ENCODE measurements at regions of chr17 and their contacts with region 1.

Region 1: GRCh38 chr17:16363749-16364536 is 10.7 kb upstream of the CENPV start:
- DNase-seq: peak; percentile 73 to 77
- ATAC-seq: peak; percentile 83 to 93 (median 88)
- H3K4me3 ChIP-seq: no peak overlapping the region
- H3K27ac ChIP-seq: peak overlapping the region; percentile 51
- H3K4me1 ChIP-seq: peaks cover 4% of the 10 kb centered on the region
- H3K27me3 ChIP-seq: no peaks in the 10 kb centered on the region
- CTCF ChIP-seq: peak; percentile 91

Region 2: GRCh38 chr17:16438557-16439302 is 74.8 kb after region 1 on chr17:
- intact Hi-C with region 1: loop called in 1 of 2 experiments (anchors 5 kb)
- DNase-seq: peak; percentile 94 to 96
- ATAC-seq: peak; percentile 89 to 94 (median 93)
- H3K4me3 ChIP-seq: peak overlapping the region; percentile 96
- H3K27ac ChIP-seq: peak overlapping the region; percentile 94
- H3K4me1 ChIP-seq: peaks cover 31% of the 10 kb centered on the region
- H3K27me3 ChIP-seq: no peaks in the 10 kb centered on the region
- CTCF ChIP-seq: no peak

Region 3: DNA sequence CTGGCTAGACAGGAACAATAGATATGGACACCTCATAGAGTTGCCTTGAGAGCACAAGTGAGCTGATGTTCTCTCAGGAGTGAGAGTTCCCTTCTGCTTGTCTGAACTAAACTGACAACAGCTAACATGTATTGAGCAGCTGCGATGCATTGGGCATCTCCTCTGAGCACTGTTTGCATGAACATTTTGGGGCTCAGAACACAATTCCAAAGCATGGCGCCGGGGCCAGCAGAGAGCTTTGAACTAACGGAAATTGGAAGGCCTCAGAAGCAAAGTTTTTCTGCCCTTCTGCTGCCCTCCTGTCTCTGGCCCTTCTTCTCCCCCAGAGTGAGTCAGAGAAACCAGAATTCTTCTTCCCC is 89.5 kb after region 1 on chr17:
- intact Hi-C with region 1: loop called in 1 of 2 experiments (anchors 5 kb)
- DNase-seq: no peak
- ATAC-seq: no peak
- H3K4me3 ChIP-seq: no peak overlapping the region
- H3K27ac ChIP-seq: no peak overlapping the region
- H3K4me1 ChIP-seq: no peaks in the 10 kb centered on the region
- H3K27me3 ChIP-seq: no peaks in the 10 kb centered on the region
- CTCF ChIP-seq: no peak

Region 4: DNA sequence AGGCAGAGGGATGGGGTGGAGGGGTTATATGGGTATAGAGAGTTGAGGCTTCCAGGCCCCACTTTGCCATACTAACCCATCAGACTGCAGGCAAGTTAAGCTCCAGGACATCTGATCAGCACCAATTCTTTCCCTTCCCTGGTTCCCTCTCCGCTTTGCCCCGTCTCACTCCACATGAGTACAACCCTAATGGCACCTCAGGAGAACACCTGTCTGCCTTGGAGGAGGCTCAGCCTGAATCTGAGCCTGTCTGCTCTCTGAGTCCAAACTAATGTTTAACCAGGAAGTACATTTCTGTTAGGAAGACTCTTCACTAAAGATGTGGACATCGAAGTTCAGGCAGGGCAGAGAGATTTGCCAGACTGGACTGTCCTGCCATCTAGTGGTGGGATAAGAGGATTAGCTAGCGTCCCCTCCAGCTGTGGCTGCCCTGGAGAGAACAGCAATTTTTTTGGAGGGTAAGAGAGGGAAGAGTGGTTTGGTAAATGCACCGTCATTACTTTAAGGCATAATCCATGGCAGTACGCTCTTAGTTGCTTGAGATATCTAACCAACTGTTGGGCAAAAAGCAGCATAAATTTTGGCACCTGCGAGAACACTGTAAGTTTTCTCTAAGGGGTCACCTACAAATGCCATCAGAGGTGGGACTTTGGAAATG is 157.3 kb after region 1 on chr17:
- intact Hi-C with region 1: loop called (anchors 2 kb)
- DNase-seq: peak; percentile 65 to 68
- ATAC-seq: peak; percentile 91 to 98 (median 94)
- H3K4me3 ChIP-seq: no peak overlapping the region
- H3K27ac ChIP-seq: no peak overlapping the region
- H3K4me1 ChIP-seq: peaks cover 8% of the 10 kb centered on the region
- H3K27me3 ChIP-seq: peaks cover 0 to 20% (median 0%) of the 10 kb centered on the region in 3 donors
- CTCF ChIP-seq: peak; percentile 92

Measured in psoas muscle (tissue), 8 donors.